Posterior vena cava (tissue), 2 donors: ENCODE measurements at regions of chr19 and their contacts with region 1.

Region 1: DNA sequence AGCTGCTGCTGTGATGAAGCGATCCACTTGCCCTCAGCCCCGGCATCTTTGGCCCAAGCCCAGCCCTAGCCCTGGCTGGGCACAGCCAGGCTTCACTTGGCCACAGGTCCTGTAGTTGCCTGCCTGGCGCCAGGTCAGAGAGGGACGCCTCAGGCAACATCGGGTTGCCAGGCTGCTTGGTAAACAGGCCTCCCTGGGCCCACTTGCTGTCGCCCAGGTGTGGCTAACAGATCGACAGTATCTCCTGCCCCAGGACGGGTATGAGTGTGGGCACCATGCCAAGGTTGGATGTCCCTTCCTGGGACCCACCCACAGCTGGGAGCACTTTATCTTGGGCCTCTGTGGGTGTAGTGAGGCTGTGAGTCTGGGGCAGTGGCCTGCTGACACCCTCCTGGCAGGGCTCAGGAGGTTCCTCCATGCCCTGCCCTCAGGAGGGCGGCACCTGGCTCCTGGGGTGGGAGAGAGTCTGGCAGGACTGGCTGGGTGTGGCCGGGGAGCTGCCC is 27.8 kb downstream of the CARM1 start:
- DNase-seq: no peak

Region 2: GRCh38 chr19:10769533-10770491 is 129.4 kb before region 1 on chr19:
- intact Hi-C with region 1: no loop called
- DNase-seq: no peak

Region 3: DNA sequence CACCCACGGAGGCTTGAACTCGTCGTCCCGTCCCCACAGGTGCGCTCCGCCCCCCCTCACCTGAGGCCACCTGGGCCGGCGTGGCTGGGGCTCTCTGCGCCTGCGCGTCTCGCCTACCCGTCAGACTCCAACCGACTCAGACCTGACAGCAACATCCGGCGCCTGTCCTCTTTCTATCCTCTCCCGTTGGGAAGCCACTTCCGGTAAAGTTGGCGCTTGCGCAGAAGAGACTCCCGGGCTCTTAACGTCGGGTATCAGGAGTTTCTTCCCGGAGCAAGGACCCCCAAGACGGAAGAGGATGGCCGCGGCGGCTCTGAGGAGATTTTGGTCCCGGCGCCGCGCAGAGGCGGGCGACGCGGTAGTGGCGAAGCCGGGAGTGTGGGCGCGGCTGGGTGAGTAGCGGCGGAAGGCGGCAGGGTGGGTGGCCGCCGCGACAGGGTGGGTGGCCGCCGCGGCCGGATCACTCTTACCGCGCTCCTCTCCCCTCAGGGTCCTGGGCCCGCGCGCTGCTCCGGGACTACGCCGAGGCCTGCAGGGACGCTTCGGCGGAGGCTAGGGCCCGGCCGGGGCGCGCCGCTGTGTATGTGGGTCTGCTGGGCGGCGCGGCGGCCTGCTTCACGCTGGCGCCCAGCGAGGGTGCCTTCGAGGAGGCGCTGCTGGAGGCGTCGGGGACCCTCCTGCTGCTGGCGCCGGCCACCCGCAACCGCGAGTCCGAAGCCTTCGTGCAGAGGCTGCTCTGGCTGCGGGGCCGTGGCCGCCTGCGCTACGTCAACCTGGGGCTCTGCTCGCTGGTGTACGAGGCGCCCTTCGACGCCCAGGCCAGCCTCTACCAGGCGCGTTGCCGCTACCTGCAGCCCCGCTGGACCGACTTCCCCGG is 29.6 kb after region 1 on chr19 and contains the starts of genes TIMM29 and YIPF2:
- intact Hi-C with region 1: no loop called
- DNase-seq: peak; percentile 99
- total RNA-seq, gene TIMM29: 9.4 to 11.6 TPM
- total RNA-seq, gene YIPF2: 36.0 to 40.0 TPM

Region 4: GRCh38 chr19:10952809-10953208 is 53.6 kb after region 1 on chr19:
- intact Hi-C with region 1: loop called in 1 of 2 experiments (anchors 2 kb)
- DNase-seq: no peak

Region 5: DNA sequence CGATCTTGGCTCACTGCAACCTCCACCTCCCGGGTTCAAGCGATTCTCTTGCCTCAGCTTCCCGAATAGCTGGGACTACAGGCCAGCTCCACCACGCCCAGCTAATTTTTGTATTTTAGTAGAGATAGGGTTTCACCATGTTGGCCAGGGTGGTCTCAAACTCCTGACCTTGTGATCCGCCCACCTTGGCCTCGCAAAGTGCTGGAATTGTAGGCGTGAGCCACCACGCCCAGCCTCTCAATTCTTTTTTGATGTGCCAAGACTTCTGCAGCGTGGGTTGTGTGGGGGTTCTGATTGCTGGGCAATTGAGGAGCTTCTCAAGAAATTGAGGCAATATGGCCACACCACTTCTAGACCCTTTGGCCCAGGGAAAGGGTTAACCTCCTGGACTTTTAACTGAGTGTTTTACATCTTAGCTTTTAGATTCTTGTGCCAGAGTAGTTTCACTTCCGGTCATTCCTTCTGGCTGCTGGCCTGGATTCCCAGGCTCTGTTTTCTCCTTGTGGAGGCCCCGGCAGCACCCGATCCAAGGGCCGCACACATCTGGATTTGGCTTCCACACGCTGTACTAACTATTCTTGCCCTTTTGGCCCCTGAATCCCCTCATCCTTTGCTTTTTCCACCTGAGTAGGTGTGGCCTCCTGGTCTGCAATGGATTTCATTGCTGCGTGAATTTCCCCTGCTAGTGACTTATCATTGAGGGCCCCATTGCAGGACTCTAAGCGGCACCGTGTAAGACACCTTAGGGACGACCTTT is 76.3 kb after region 1 on chr19:
- intact Hi-C with region 1: loop called in 1 of 2 experiments (anchors 1 kb)
- DNase-seq: no peak